ENCODE measurements at regions of chr14 and their contacts with region 1.

Region 1: DNA sequence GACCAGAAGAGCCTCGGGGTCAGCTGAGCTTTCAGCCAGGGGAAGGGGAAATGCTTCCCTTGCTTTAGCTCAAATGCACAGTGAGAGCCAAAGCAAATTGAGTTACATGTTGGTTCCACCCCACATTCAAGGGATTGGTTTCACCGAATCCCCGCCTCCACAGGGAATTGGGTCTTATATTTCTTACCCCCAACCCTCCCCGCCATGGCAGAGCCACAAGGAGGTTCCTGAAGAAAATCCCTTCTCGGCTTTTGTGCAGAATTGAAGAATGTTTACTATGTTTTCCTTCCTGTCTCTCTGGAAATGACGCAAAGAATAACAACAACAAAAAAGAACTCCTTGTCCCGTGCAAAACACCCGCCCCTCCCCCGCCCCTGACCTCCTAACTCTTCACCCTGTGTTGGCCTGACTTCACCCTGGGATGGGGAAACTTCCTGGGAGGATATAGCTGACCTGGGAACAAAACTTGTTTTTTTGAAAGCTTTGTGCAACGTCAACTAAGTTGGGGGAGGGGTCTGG is 21.9 kb upstream of the CIPC start:
- DNase-seq: no peak
- H3K4me3 ChIP-seq: no peak overlapping the region
- H3K4me3 Mint-ChIP-seq: no peak overlapping the region
- H3K27ac ChIP-seq: no peak overlapping the region
- H3K27ac Mint-ChIP-seq: no peak overlapping the region
- H3K4me1 ChIP-seq: no peaks in the 10 kb centered on the region
- H3K4me1 Mint-ChIP-seq: no peaks in the 10 kb centered on the region
- H3K27me3 ChIP-seq: no peaks in the 10 kb centered on the region
- H3K27me3 Mint-ChIP-seq: peaks cover 0 to 2% of the 10 kb centered on the region in 2 donors

Region 2: DNA sequence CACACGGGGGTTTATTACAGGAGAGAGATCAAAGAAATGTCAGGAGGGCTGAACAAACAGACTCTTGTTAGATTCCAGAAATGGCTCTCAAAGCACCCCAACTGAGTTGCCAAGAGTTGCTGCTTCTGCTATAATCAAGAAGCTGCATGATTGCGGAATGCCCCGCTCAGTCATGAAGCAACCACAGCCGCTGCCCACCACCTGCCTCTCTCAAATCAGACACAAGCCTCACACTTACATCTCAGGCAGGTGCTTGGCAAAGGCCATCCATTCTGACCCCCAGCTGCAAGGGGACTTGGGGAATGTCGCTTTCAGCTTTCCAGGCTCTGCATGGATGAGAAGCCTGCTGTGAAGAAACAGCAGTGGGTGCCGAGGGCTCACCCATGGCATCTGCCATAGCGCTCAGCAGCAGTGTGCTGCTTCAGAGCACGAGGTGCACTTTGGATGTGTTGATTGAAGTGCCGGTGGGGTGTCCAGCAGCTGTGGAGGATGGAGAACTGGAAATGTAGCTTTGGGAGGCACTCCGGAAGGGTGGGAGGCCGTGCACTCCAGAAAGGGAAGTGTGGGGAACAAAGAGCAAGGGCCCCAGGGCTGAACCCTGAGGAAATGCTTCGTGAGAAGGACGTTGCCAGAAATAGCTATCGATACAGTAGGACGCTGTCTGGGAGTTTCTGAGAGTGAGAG is 212.3 kb before region 1 on chr14:
- CTCF ChIA-PET with region 1: interaction called, 14 read pairs
- POLR2A ChIA-PET with region 1: no interaction called
- intact Hi-C with region 1: no loop called
- DNase-seq: no peak
- H3K4me3 ChIP-seq: no peak overlapping the region
- H3K4me3 Mint-ChIP-seq: peak overlapping the region in 4 of 8 donors; percentile 28 to 47 (median 44)
- H3K27ac ChIP-seq: no peak overlapping the region
- H3K27ac Mint-ChIP-seq: peak overlapping the region in 2 of 7 donors; percentile 70 to 89
- H3K4me1 ChIP-seq: peaks cover 13% of the 10 kb centered on the region
- H3K4me1 Mint-ChIP-seq: peaks cover 17 to 33% (median 24%) of the 10 kb centered on the region in 4 donors
- H3K27me3 ChIP-seq: no peaks in the 10 kb centered on the region
- H3K27me3 Mint-ChIP-seq: peaks cover 2 to 9% of the 10 kb centered on the region in 2 donors

Region 3: GRCh38 chr14:77059276-77059915 is 16.8 kb before region 1 on chr14:
- CTCF ChIA-PET with region 1: interaction called, 122 read pairs
- POLR2A ChIA-PET with region 1: no interaction called
- intact Hi-C with region 1: no loop called
- DNase-seq: peak in 3 of 5 donors; percentile 17 to 51 (median 47)
- H3K4me3 ChIP-seq: no peak overlapping the region
- H3K4me3 Mint-ChIP-seq: no peak overlapping the region
- H3K27ac ChIP-seq: no peak overlapping the region
- H3K27ac Mint-ChIP-seq: peak overlapping the region in 2 of 7 donors; percentile 10 to 50
- H3K4me1 ChIP-seq: peaks cover 19% of the 10 kb centered on the region
- H3K4me1 Mint-ChIP-seq: peaks cover 11 to 19% (median 15%) of the 10 kb centered on the region in 4 donors
- H3K27me3 ChIP-seq: no peaks in the 10 kb centered on the region
- H3K27me3 Mint-ChIP-seq: no peaks in the 10 kb centered on the region

Region 4: DNA sequence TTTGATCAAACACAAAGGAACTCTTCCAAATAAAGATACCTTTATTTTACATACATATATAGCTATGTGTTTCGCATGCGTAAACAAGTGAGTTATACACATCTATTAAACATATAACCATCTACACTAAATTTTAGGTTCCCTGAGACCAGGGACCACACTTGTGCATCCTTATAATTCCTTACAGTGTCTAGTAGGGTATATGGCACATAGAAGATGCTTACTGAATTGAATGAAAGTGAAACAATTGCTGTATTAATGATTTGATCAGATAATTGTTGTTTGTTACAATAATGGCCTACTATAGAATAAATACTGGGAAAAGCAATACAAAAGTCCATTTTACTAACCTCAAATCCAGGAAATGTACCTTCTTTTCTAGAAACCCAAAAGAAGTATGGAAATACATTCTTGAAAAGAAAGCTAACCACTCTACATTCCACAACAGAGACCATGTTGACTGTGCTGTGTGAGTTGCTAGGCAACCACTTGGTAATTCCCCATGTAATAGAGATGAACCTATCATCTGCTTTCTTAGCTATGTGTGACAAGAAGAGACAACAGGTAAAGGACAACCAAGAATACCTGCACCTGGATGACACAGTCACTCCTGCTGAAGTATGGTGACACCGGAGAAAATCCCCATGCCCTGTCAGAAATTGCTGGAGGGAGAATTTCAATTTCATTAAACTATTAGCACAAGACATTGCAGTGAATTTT is 10.0 kb after region 1 on chr14:
- CTCF ChIA-PET with region 1: interaction called, 28 read pairs
- POLR2A ChIA-PET with region 1: no interaction called
- intact Hi-C with region 1: no loop called
- DNase-seq: peak in 4 of 5 donors; percentile 41 to 59 (median 48)
- H3K4me3 ChIP-seq: no peak overlapping the region
- H3K4me3 Mint-ChIP-seq: peak overlapping the region in 1 of 8 donors; percentile 33
- H3K27ac ChIP-seq: no peak overlapping the region
- H3K27ac Mint-ChIP-seq: peak overlapping the region in 5 of 7 donors; percentile 68 to 97 (median 90)
- H3K4me1 ChIP-seq: peaks cover 17% of the 10 kb centered on the region
- H3K4me1 Mint-ChIP-seq: peaks cover 4 to 19% (median 8%) of the 10 kb centered on the region in 4 donors
- H3K27me3 ChIP-seq: no peaks in the 10 kb centered on the region
- H3K27me3 Mint-ChIP-seq: peaks cover 2 to 9% of the 10 kb centered on the region in 2 donors

Region 5: GRCh38 chr14:77124345-77125280 is 48.4 kb after region 1 on chr14:
- CTCF ChIA-PET with region 1: interaction called, 70 read pairs
- POLR2A ChIA-PET with region 1: interaction called, 7 read pairs
- intact Hi-C with region 1: loop called (anchors 2 kb)
- DNase-seq: peak; percentile 72 to 83 (median 79)
- H3K4me3 ChIP-seq: peak overlapping the region; percentile 66 to 82
- H3K4me3 Mint-ChIP-seq: peak overlapping the region; percentile 85 to 92 (median 88)
- H3K27ac ChIP-seq: peak overlapping the region; percentile 45
- H3K27ac Mint-ChIP-seq: peak overlapping the region; percentile 50 to 95 (median 91)
- H3K4me1 ChIP-seq: peaks cover 57% of the 10 kb centered on the region
- H3K4me1 Mint-ChIP-seq: peaks cover 17 to 59% (median 45%) of the 10 kb centered on the region in 4 donors
- H3K27me3 ChIP-seq: no peaks in the 10 kb centered on the region
- H3K27me3 Mint-ChIP-seq: peaks cover 6 to 13% of the 10 kb centered on the region in 2 donors